ENCODE measurements at regions of chr3 and their contacts with region 1.

Region 1: DNA sequence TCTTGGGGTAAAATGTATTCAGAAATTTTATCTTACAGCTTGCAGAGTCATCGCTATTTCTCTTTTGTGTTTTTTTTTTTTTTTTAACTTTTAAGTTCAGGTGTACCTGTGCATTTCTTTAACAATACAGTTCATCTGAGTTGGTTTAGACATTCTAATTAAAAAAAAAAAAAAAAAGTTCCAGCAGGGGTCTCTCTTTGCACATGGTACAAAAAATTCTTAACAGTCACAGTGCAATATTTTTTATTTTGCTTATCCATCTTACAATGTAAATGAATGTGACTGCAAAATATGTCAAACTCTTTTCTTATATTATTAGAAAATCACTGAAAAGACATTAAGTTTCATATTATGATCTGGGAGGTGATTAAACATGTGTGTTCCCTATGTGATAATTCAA is 47.5 kb upstream of the SLC9A9 start:
- DNase-seq: no peak
- H3K4me3 Mint-ChIP-seq: no peak overlapping the region
- H3K27ac Mint-ChIP-seq: no peak overlapping the region
- H3K4me1 Mint-ChIP-seq: peaks cover 9% of the 10 kb centered on the region
- H3K27me3 Mint-ChIP-seq: no peaks in the 10 kb centered on the region
- CTCF ChIP-seq: peak; percentile 36

Region 2: GRCh38 chr3:143951351-143951971 is 55.7 kb after region 1 on chr3:
- CTCF ChIA-PET with region 1: no interaction called
- intact Hi-C with region 1: loop called (anchors 1 kb)
- DNase-seq: peak; percentile 55
- H3K4me3 Mint-ChIP-seq: no peak overlapping the region
- H3K27ac Mint-ChIP-seq: no peak overlapping the region
- H3K4me1 Mint-ChIP-seq: no peaks in the 10 kb centered on the region
- H3K27me3 Mint-ChIP-seq: no peaks in the 10 kb centered on the region
- CTCF ChIP-seq: peak; percentile 83